Heart right ventricle (tissue), 16 donors: ENCODE measurements at regions of chrX and their contacts with region 1.

Region 1: DNA sequence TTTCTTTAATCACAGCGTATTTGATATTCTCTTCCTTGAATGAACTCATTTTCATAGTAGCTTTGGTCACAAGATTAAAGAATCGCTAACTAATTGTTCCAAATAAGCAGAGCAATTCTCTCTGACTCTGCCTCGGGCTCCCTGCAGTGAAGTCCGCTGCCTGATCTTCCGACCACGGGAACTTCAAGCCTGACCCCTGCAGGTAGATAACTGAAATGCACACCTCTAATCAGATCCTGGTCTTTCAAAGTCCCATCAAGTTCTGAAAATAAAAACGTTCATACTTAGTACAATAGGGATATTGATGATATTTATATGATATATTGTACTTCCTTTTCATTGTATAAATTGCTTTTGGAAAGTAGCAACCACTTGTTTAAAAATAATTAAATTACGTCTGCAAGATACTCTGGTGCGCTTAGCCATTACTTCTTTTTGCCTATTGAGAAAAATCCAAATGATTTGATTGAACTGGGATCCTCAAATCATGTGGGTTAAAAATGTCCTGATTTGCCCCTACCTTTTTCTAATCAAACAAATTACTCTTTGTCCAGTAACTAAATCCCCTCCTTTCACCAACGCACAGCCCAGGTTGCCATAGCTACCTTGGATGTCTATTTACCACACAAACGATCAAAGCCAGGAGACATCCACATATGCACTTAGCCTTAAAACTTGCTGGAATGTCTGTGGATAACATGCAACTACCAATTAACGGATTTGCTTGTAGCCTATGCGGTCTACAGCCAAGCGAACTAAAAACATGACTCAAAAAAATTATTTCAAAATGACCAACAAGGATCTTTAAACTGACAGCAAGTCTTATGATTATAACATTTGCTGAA is 4.2 kb downstream of the MID1 start:
- DNase-seq: peak; percentile 11 to 38
- ATAC-seq: peak in 5 of 8 donors; percentile 45 to 73 (median 55)
- H3K4me3 ChIP-seq: peak overlapping the region in 5 of 10 donors; percentile 10 to 68 (median 28)
- H3K27ac ChIP-seq: peak overlapping the region in 2 of 10 donors; percentile 15 to 22
- H3K4me1 ChIP-seq: peaks cover 0 to 10% (median 0%) of the 10 kb centered on the region in 9 donors
- H3K27me3 ChIP-seq: peaks cover 0 to 70% (median 0%) of the 10 kb centered on the region in 7 donors
- CTCF ChIP-seq: peak; percentile 31 to 75 (median 60)

Region 2: GRCh38 chrX:10189317-10190268 is 426.6 kb before region 1 on chrX:
- intact Hi-C with region 1: loop called in 7 of 10 experiments (anchors 5 to 10 kb)
- DNase-seq: peak; percentile 52 to 58
- ATAC-seq: peak; percentile 85 to 94 (median 89)
- H3K4me3 ChIP-seq: no peak overlapping the region
- H3K27ac ChIP-seq: no peak overlapping the region
- H3K4me1 ChIP-seq: peaks cover 0 to 15% (median 3%) of the 10 kb centered on the region in 9 donors
- H3K27me3 ChIP-seq: peaks cover 0 to 15% (median 0%) of the 10 kb centered on the region in 7 donors
- CTCF ChIP-seq: peak; percentile 41 to 85 (median 70)

Region 3: DNA sequence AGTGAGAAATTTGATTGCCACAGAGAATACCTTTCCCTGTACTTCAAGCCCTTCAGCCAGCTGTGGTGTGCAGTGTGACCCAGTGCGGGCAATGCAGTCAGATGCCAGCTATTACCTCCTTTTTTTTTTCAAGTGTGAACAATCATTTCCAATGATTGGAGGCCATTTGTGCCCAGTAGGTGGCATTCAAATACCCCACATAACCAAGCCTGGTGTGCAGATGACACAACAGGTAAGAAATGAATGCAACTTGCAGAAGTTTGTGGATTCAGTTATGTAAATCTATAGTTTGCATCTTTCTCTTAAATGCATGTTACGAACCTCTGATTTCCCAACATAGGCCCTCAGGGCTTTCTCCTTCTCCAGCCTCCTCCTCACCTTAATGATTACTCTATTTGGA is 361.4 kb before region 1 on chrX:
- intact Hi-C with region 1: loop called in 1 of 10 experiments (anchors 10 kb)
- DNase-seq: no peak
- ATAC-seq: no peak
- H3K4me3 ChIP-seq: no peak overlapping the region
- H3K27ac ChIP-seq: no peak overlapping the region
- H3K4me1 ChIP-seq: no peaks in the 10 kb centered on the region
- H3K27me3 ChIP-seq: peaks cover 0 to 6% (median 0%) of the 10 kb centered on the region in 7 donors
- CTCF ChIP-seq: peak in 4 of 9 donors; percentile 11 to 23 (median 16)

Region 4: DNA sequence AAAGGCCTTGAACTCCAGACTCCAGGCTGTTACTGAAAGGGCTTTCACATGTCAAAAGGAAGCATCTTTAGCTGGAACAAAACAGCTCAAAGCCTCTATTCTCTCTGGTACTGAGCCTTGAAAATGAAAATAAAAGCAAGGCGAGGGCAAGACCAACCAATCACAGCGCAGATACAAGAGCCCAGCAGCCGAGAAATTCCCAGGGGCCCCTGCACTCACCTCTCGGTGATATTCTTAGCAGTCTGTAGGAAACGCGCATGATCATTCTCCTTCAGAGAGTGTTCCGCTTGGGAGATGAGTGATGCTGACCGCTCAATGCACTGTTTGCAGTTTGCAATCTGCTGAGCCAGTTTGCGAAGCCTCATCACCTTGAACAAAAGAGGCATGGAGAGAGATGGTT is 133.9 kb before region 1 on chrX:
- intact Hi-C with region 1: loop called in 2 of 10 experiments (anchors 5 to 10 kb)
- DNase-seq: peak; percentile 32 to 64
- ATAC-seq: peak in 7 of 8 donors; percentile 47 to 89 (median 78)
- H3K4me3 ChIP-seq: peak overlapping the region in 5 of 10 donors; percentile 3 to 36 (median 22)
- H3K27ac ChIP-seq: peak overlapping the region; percentile 50 to 92 (median 80)
- H3K4me1 ChIP-seq: peaks cover 0 to 51% (median 30%) of the 10 kb centered on the region in 9 donors
- H3K27me3 ChIP-seq: no peaks in the 10 kb centered on the region
- CTCF ChIP-seq: no peak

Region 5: GRCh38 chrX:10722851-10723250 is 106.7 kb after region 1 on chrX:
- intact Hi-C with region 1: loop called in 1 of 10 experiments (anchors 10 kb)
- DNase-seq: peak in 1 of 2 donors; percentile 54
- ATAC-seq: peak in 5 of 8 donors; percentile 25 to 77 (median 75)
- H3K4me3 ChIP-seq: no peak overlapping the region
- H3K27ac ChIP-seq: no peak overlapping the region
- H3K4me1 ChIP-seq: no peaks in the 10 kb centered on the region
- H3K27me3 ChIP-seq: no peaks in the 10 kb centered on the region
- CTCF ChIP-seq: peak; percentile 42 to 79 (median 67)